ENCODE measurements at regions of chr3 and their contacts with region 1.

Region 1: GRCh38 chr3:185659942-185660921 is 74.1 kb downstream of the SENP2 start:
- DNase-seq: peak; percentile 8
- ATAC-seq: peak; percentile 97
- H3K4me3 ChIP-seq: no peak overlapping the region
- H3K27ac ChIP-seq: no peak overlapping the region
- H3K4me1 ChIP-seq: no peaks in the 10 kb centered on the region
- H3K27me3 ChIP-seq: peaks cover 2 to 6% of the 10 kb centered on the region in 2 experiments; a peak in 3 of 4 replicates
- CTCF ChIP-seq: peak; percentile 97 to 99 (median 98); a peak in 5 of 6 replicates
- EP300 ChIP-seq: no peak
- POLR2A ChIP-seq: no peak
- RAD21 ChIP-seq: peak; percentile 94

Region 2: GRCh38 chr3:185552358-185552877 is 107.8 kb before region 1 on chr3 and contains the start of gene LIPH:
- CTCF ChIA-PET with region 1: no interaction called
- POLR2A ChIA-PET with region 1: no interaction called
- RAD21 ChIA-PET with region 1: no interaction called
- SMC1A ChIA-PET with region 1: no interaction called
- in situ Hi-C with region 1: no loop called
- intact Hi-C with region 1: no loop called
- DNase-seq: peak; percentile 61
- ATAC-seq: peak; percentile 81
- H3K4me3 ChIP-seq: peak within 1 kb of the TSS; percentile 65
- H3K27ac ChIP-seq: peak within 1 kb of the TSS; percentile 68
- H3K4me1 ChIP-seq: peaks cover 17% of the 10 kb centered on the region
- H3K27me3 ChIP-seq: no peaks in the 10 kb centered on the region
- CTCF ChIP-seq: no peak
- EP300 ChIP-seq: peak in 1 of 2 experiments; percentile 37; a peak in 1 of 4 replicates
- POLR2A ChIP-seq: no peak
- RAD21 ChIP-seq: no peak
- polyA plus RNA-seq, gene LIPH: 2.2 to 4.7 TPM

Region 3: DNA sequence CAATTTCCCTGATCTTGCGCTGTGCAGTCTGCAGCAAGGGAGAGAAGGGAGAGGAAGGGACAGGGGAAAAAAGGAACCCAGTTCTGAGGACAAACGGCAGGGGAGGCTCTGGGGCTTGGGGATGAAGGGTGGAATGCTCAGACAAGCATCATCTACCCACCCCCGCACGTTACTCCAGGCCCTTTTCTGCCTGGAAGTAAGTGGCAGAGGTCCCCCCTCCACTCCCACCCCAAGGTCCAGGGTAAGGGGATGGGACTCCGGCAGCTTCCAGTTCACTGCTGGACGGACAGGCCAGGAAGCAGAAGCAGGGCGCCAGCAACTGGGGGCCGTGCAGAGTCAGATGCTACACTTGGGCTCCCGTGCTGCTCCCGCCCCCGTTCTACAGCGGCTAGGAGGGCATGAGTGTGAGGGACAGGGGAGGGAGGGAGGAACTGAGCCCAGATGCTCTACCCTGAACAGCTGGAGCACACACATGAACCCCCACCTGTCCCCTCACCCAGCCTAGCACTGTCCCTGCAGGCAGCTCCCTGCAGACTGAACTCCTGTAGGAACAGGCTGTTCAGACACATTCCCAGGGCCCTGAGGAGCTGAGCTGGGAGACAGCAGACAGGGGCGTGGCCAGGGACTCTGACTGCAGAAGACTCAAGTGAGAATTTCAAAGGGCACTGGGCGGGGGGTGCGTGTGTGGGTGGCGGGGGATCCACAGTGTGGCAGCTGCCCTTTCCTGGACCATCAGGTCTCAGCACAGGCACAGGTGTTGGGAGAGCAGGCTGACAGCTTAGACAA is 14.4 kb before region 1 on chr3:
- CTCF ChIA-PET with region 1: interaction called, 22 read pairs
- POLR2A ChIA-PET with region 1: interaction called, 3 read pairs
- RAD21 ChIA-PET with region 1: no interaction called
- SMC1A ChIA-PET with region 1: interaction called, 5 read pairs
- in situ Hi-C with region 1: no loop called
- intact Hi-C with region 1: no loop called
- DNase-seq: no peak
- ATAC-seq: no peak; the same call in 2 of the 3 replicates
- H3K4me3 ChIP-seq: no peak overlapping the region
- H3K27ac ChIP-seq: no peak overlapping the region
- H3K4me1 ChIP-seq: peaks cover 5% of the 10 kb centered on the region; the same call in 1 of the 2 replicates
- H3K27me3 ChIP-seq: peaks cover 0 to 1% of the 10 kb centered on the region in 2 experiments; a peak in 1 of 4 replicates
- CTCF ChIP-seq: no peak
- EP300 ChIP-seq: no peak
- POLR2A ChIP-seq: no peak
- RAD21 ChIP-seq: no peak

Region 4: DNA sequence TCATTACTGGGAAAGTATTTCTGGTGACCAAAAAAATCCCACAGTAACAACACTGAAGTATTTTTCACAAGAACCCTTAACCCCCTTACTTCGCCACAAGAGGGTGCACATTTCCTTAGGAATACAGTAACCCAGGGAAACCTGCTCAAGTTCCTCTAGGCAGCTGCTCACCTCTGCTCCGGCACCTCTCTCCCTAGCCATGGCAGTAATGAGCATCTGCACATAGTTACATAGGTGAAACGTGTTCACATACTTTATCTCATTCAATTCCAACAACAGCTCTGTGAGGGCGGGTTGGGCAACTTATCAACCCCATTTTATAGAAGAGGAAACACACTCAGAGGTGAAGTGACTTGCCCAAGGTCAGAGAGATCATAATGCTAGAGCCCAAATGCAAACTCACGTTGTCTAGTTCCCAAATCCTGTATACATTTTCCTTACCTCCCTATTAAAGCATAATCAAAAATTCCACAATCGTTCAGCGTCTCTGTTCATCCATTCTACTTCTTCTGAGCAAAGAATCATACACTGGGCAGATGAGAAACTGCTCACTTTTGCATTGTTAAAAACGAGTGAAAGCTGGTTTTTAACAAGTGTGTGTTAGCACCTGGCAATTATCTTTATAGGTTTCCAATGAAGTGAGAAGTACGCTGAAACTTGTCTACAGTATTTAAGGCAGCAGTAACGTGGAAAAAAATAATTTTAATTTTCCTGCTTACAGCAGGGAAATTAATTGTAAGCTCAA is 73.9 kb after region 1 on chr3:
- CTCF ChIA-PET with region 1: interaction called, 11 read pairs
- POLR2A ChIA-PET with region 1: no interaction called
- RAD21 ChIA-PET with region 1: interaction called, 3 read pairs
- SMC1A ChIA-PET with region 1: no interaction called
- in situ Hi-C with region 1: no loop called
- intact Hi-C with region 1: no loop called
- DNase-seq: no peak
- ATAC-seq: peak; percentile 81
- H3K4me3 ChIP-seq: no peak overlapping the region
- H3K27ac ChIP-seq: no peak overlapping the region
- H3K4me1 ChIP-seq: peaks cover 5% of the 10 kb centered on the region; the same call in 1 of the 2 replicates
- H3K27me3 ChIP-seq: no peaks in the 10 kb centered on the region
- CTCF ChIP-seq: peak; percentile 49 to 58 (median 49); a peak in 4 of 6 replicates
- EP300 ChIP-seq: no peak
- POLR2A ChIP-seq: no peak
- RAD21 ChIP-seq: peak; percentile 80

Region 5: DNA sequence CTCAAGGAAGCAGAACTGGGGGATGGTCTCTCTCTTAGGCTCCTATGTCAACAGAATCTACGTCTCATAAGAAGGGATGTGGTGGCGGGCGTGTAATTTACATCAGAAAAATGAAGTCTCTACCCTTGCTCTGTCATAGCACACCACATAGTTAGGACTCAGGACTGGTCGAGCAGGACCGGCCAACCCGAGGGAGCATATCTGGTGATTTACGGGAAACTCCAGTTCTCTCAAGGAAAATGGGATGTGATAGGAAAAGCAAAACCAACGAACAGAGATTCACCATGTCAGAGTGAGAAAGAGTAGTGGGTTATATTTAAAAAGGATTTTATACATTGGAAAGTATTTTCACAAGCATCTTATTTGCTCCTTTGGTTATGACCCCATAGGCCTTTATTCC is 109.9 kb after region 1 on chr3:
- CTCF ChIA-PET with region 1: interaction called, 198 read pairs
- POLR2A ChIA-PET with region 1: no interaction called
- RAD21 ChIA-PET with region 1: interaction called, 34 read pairs
- SMC1A ChIA-PET with region 1: interaction called, 37 read pairs
- in situ Hi-C with region 1: no loop called
- intact Hi-C with region 1: loop called (anchors 1 kb)
- DNase-seq: no peak
- ATAC-seq: no peak
- H3K4me3 ChIP-seq: no peak overlapping the region
- H3K27ac ChIP-seq: no peak overlapping the region
- H3K4me1 ChIP-seq: no peaks in the 10 kb centered on the region
- H3K27me3 ChIP-seq: no peaks in the 10 kb centered on the region; a peak in 1 of 4 replicates
- CTCF ChIP-seq: no peak
- EP300 ChIP-seq: no peak
- POLR2A ChIP-seq: no peak
- RAD21 ChIP-seq: no peak

Region 6: DNA sequence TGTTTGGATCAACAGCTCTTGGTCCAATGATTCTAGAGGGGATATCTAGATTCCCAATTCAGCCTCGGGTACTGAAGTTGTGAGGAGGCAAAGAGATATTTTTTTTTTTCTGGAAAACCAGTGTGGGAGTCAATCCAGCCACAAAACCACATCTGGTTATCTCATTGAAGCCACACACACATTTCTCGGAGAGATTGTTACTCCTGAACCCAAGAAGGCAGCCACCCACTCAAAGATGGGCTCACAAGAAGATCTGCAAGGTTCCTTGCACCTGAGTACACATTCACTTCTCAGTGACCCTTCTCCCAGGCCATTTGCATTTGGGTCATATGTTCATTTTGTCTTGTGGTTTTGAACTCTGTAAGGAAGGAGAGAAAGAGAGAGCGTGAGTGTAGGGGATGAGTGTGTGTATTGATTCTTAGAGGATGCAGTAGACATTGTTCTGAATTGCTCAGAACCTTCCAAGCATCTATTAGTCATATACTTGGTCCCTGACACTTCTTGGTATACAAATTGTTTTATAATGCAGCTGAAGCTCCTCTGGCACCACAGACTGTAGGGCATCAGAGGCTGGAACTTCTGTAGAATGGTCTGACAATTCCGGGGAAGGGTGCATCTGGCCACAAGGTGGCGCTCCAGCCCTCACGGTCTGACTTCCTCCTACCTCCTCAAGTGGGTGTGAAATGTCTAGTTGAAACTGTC is 316.9 kb after region 1 on chr3:
- CTCF ChIA-PET with region 1: interaction called, 10 read pairs
- POLR2A ChIA-PET with region 1: no interaction called
- RAD21 ChIA-PET with region 1: no interaction called
- SMC1A ChIA-PET with region 1: no interaction called
- in situ Hi-C with region 1: no loop called
- intact Hi-C with region 1: no loop called
- DNase-seq: peak; percentile 42
- ATAC-seq: peak; percentile 100
- H3K4me3 ChIP-seq: no peak overlapping the region
- H3K27ac ChIP-seq: no peak overlapping the region
- H3K4me1 ChIP-seq: peaks cover 4% of the 10 kb centered on the region; the same call in 1 of the 2 replicates
- H3K27me3 ChIP-seq: no peaks in the 10 kb centered on the region
- CTCF ChIP-seq: peak; percentile 85 to 93 (median 90)
- EP300 ChIP-seq: no peak
- POLR2A ChIP-seq: no peak
- RAD21 ChIP-seq: peak; percentile 76

Measured in GM12878 (cell line).